ENCODE measurements at regions of chr22 and their contacts with region 1.

Region 1: GRCh38 chr22:30947816-30948454 is 20.6 kb downstream of the MORC2 start:
- DNase-seq: no peak
- ATAC-seq: peak; percentile 74

Region 2: DNA sequence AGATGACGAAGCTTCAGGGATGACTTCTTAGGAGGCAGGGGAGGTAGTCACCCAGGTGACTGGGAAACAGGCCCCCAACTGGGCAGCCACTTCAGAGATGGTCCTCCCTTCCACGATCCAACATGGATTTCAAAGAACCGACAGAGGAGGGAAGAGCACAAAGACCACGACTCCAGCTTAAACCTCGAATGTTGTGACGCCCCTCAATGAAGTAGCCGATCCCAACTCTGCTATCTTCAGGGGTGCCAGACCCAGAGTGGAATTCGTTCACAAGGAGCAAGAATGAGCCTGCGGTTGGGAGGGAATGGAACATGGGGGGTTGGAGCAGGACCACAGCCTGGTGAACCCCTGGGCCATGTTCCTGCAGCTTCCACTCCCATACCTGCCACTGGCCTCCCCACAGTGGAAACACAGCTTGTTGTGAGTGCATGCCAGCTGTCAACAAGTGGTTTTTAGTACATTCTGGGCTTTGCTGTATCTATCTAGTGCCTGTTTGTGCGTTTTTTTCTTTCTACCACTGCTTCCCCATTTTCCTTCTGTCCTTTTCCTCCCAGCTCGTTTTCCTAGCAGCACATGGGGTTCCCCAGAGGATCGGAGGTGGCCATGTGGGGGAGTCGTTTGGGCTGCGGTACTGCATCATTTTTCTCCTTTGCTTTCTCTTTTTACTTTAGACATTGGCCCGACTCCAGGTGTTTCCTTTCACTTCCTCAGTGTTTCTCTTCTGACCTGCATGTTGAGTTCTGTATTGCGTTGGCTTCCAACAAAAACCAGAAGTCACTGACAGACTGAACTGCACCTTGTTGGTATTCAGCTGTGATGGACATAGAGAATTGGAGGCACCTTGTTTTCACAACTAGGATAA is 45.2 kb before region 1 on chr22:
- intact Hi-C with region 1: no loop called
- DNase-seq: no peak
- ATAC-seq: no peak

Region 3: DNA sequence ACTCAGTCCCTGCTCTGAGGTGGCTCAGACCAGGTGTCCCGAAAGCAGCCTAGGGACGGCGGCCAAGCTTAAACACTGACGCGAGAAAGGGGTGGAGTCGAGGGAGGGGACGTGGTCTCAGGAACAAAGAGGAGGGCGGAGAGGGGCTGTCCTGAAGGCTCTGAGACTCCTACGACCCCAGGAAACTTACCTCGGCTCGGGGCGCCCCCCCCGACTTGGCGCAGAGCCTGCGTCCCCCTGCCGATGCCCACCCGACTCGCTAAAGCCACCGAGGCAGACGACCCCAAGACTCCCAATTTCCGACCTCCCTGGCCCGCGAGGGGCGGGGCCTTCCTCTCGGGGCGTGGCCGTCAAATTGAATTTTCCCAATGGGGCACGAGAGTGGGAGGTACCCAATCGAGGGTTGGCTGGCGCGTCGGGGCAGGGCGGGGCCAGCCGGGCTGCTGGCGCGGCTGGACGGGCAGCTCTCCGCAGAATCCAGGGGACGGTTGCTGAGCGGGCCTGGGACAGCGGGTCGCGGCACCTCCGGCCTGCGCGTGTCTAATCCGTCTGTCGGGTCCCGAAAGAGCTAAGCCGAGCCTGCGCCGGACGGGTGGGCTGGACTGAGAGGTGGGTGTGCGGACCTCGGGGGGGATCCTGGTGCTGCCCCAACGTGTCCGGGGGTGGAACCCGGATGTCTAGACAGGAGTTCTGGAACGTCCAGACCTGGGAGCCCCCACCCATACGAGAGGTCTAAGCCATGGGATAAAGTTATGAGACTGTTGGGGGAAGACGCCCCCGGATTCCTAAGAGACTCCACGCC is 133.1 kb after region 1 on chr22 and contains the start of gene SMTN:
- intact Hi-C with region 1: loop called (anchors 5 kb)
- DNase-seq: peak; percentile 95
- ATAC-seq: peak; percentile 81
- total RNA-seq, gene SMTN: 278 TPM

Region 4: GRCh38 chr22:31148953-31149627 is 201.2 kb after region 1 on chr22:
- intact Hi-C with region 1: loop called (anchors 5 kb)
- DNase-seq: peak; percentile 73
- ATAC-seq: peak; percentile 97

Measured in left ventricle myocardium superior (tissue), 1 donor.